GM12878 (cell line): ENCODE measurements at regions of chr11 and their contacts with region 1.

Region 1: GRCh38 chr11:67382276-67383136 is 9.1 kb upstream of the CLCF1 start:
- DNase-seq: no peak
- ATAC-seq: peak; percentile 93
- H3K4me3 ChIP-seq: no peak overlapping the region
- H3K27ac ChIP-seq: no peak overlapping the region
- H3K4me1 ChIP-seq: peaks cover 19% of the 10 kb centered on the region
- H3K27me3 ChIP-seq: peaks cover 0 to 3% of the 10 kb centered on the region in 2 experiments; a peak in 2 of 4 replicates
- CTCF ChIP-seq: peak; percentile 99; a peak in 5 of 6 replicates
- EP300 ChIP-seq: no peak
- POLR2A ChIP-seq: no peak
- RAD21 ChIP-seq: peak; percentile 99

Region 2: GRCh38 chr11:67252831-67253239 is 129.7 kb before region 1 on chr11:
- CTCF ChIA-PET with region 1: interaction called, 11 read pairs
- POLR2A ChIA-PET with region 1: no interaction called
- RAD21 ChIA-PET with region 1: no interaction called
- SMC1A ChIA-PET with region 1: interaction called, 3 read pairs
- in situ Hi-C with region 1: no loop called
- intact Hi-C with region 1: no loop called
- DNase-seq: no peak
- ATAC-seq: peak; percentile 74
- H3K4me3 ChIP-seq: no peak overlapping the region
- H3K27ac ChIP-seq: no peak overlapping the region
- H3K4me1 ChIP-seq: no peaks in the 10 kb centered on the region
- H3K27me3 ChIP-seq: no peaks in the 10 kb centered on the region
- CTCF ChIP-seq: peak; percentile 32 to 44 (median 35); a peak in 4 of 6 replicates
- EP300 ChIP-seq: no peak
- POLR2A ChIP-seq: peak; percentile 46; the same call in 1 of the 2 replicates
- RAD21 ChIP-seq: peak; percentile 38

Region 3: DNA sequence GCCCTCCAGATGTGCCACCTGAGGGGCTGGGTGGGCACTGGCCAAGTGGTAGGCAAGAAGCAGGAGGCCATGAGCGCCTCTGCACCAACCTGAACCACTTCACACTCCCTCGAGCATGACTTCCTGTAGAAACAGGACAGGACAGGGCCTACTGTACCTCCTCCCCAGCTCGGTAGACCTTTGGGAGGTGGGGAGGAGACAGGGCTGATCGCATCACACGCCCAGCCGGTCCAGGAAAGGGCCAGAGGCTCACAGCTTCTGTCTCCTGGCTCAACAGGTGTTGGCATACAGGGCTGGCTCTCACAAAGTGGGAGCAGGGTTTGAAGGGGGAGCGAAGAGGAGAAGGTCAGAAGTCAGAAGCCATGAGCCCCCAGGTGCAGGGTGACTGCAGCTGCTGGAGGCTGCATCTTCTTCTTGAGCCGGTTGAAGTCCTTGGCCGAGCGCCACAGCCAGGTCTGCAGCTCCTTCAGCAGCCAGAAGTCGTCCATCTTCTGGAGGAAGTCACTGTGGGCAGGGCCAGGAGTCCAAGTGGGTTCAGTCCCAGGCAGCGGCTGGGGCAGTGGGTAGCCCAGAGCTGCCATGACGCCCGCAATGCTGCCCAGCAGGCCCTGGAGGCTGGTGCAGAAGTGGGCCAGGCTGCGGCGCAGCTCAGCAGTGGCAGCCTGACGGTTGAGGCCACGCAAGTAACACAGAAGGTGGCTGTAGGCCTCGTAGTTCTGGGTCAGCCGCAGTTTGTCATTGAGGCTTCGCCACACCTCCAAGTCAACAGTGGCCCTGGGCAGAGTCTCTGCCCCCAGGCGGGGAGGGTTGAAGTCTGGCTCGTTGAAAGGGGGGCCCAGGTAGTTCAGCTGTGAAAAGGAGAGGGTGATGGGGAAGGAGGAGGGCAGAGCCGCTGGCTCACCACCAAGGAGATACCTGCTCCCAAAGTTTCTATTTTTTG is 17.5 kb before region 1 on chr11:
- CTCF ChIA-PET with region 1: interaction called, 1,301 read pairs
- POLR2A ChIA-PET with region 1: interaction called, 23 read pairs
- RAD21 ChIA-PET with region 1: interaction called, 24 read pairs
- SMC1A ChIA-PET with region 1: interaction called, 646 read pairs
- in situ Hi-C with region 1: no loop called
- intact Hi-C with region 1: no loop called
- DNase-seq: no peak
- ATAC-seq: peak; percentile 11; the same call in 1 of the 3 replicates
- H3K4me3 ChIP-seq: no peak overlapping the region
- H3K27ac ChIP-seq: no peak overlapping the region
- H3K4me1 ChIP-seq: peaks cover 11% of the 10 kb centered on the region
- H3K27me3 ChIP-seq: peaks cover 1 to 4% of the 10 kb centered on the region in 2 experiments; a peak in 3 of 4 replicates
- CTCF ChIP-seq: no peak
- EP300 ChIP-seq: no peak
- POLR2A ChIP-seq: no peak
- RAD21 ChIP-seq: no peak

Region 4: GRCh38 chr11:68038718-68039525 is 656.4 kb after region 1 on chr11 and contains the start of gene TCIRG1:
- CTCF ChIA-PET with region 1: no interaction called
- POLR2A ChIA-PET with region 1: no interaction called
- RAD21 ChIA-PET with region 1: no interaction called
- SMC1A ChIA-PET with region 1: no interaction called
- in situ Hi-C with region 1: no loop called
- intact Hi-C with region 1: no loop called
- DNase-seq: peak; percentile 15
- ATAC-seq: peak; percentile 78
- H3K4me3 ChIP-seq: peak within 1 kb of the TSS; percentile 99
- H3K27ac ChIP-seq: peak within 1 kb of the TSS; percentile 91
- H3K4me1 ChIP-seq: peaks cover 13% of the 10 kb centered on the region
- H3K27me3 ChIP-seq: no peaks in the 10 kb centered on the region
- CTCF ChIP-seq: no peak
- EP300 ChIP-seq: no peak
- POLR2A ChIP-seq: peak; percentile 91
- RAD21 ChIP-seq: no peak
- polyA plus RNA-seq, gene TCIRG1: 0.76 to 7.5 TPM